ENCODE measurements at regions of chr11 and their contacts with region 1.

Region 1: GRCh38 chr11:111378861-111379601 is at the start of gene POU2AF1:
- DNase-seq: peak; percentile 36 to 87 (median 83)
- ATAC-seq: peak; percentile 91
- H3K4me3 ChIP-seq: peak within 1 kb of the TSS; percentile 39
- H3K4me3 Mint-ChIP-seq: peak within 1 kb of the TSS; percentile 73 to 89 (median 84)
- H3K27ac ChIP-seq: peak within 1 kb of the TSS; percentile 58
- H3K27ac Mint-ChIP-seq: peak within 1 kb of the TSS; percentile 85 to 99 (median 95)
- H3K4me1 ChIP-seq: peaks cover 0 to 19% of the 10 kb centered on the region in 2 donors
- H3K4me1 Mint-ChIP-seq: peaks cover 7 to 50% (median 42%) of the 10 kb centered on the region in 7 donors
- H3K27me3 ChIP-seq: no peaks in the 10 kb centered on the region
- H3K27me3 Mint-ChIP-seq: peaks cover 0 to 3% (median 0%) of the 10 kb centered on the region in 5 donors
- total RNA-seq, gene POU2AF1: 0.57 to 11.3 (median 4.9) TPM

Region 2: DNA sequence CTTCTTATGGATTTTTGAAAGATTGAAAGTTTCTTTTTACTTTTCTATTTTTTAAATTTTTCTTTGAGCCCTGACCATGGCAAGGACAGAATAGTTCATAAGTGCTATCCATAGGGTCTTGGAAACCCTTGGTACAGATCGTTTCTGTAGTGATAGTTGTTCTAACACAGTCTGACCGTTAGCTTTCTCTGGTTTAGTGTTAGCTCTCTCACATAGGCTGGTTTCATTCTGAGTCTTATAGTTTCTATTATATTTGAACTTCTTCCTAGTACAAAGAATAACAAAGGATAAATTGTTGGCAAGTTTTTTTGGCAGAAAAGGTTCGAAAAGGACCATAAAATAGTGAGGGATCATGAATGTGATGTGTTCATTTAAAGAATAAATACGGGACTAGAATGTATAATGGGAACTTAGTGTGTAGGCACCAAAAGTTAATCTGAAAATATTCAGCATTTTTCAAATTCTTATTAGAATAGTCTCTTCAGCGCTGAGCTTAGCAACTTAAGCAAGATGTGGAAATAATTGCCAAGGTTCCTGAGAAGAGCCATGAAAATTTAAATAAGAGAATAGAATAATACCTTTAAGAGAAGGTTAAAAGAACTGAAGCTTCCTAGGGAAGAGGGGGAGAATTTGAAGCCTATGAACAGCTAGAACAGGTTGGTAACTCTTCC is 925.2 kb before region 1 on chr11:
- CTCF ChIA-PET with region 1: no interaction called
- POLR2A ChIA-PET with region 1: no interaction called
- intact Hi-C with region 1: loop called in 1 of 2 experiments (anchors 10 kb)
- DNase-seq: no peak
- ATAC-seq: no peak
- H3K4me3 ChIP-seq: no peak overlapping the region
- H3K4me3 Mint-ChIP-seq: peak overlapping the region in 1 of 10 donors; percentile 71
- H3K27ac ChIP-seq: no peak overlapping the region
- H3K27ac Mint-ChIP-seq: peak overlapping the region in 1 of 9 donors; percentile 73
- H3K4me1 ChIP-seq: no peaks in the 10 kb centered on the region
- H3K4me1 Mint-ChIP-seq: peaks cover 19 to 54% (median 41%) of the 10 kb centered on the region in 7 donors
- H3K27me3 ChIP-seq: no peaks in the 10 kb centered on the region
- H3K27me3 Mint-ChIP-seq: no peaks in the 10 kb centered on the region

Region 3: DNA sequence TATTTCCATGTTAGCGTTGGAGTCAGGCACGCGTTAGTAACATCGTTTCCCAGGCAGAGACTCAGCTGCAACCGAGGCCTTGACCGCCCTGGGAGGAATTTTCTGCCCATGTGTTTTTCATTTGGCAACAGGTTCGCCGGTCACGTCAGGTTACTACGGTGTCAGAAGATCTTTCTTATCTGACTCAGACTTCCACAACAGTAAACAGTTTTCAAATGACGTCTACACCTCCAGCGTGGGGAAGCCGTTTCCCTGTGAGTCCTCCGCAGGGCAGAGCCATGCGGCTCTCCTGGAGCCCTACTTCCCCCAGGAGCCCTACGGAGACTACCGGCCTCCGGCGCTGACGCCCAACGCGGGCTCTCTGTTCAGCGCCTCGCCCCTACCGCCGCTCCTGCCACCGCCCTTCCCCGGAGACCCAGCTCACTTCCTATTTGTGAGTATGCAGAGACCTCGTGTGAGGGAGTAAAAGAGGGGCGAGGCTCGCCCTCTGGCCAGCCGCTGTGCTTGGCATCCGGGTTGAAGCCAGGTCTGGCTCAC is 95.0 kb before region 1 on chr11:
- CTCF ChIA-PET with region 1: interaction called, 4 read pairs
- POLR2A ChIA-PET with region 1: no interaction called
- intact Hi-C with region 1: loop called in 1 of 2 experiments (anchors 2 kb)
- DNase-seq: no peak
- ATAC-seq: peak; percentile 6
- H3K4me3 ChIP-seq: no peak overlapping the region
- H3K4me3 Mint-ChIP-seq: no peak overlapping the region
- H3K27ac ChIP-seq: no peak overlapping the region
- H3K27ac Mint-ChIP-seq: no peak overlapping the region
- H3K4me1 ChIP-seq: no peaks in the 10 kb centered on the region
- H3K4me1 Mint-ChIP-seq: peaks cover 0 to 3% (median 0%) of the 10 kb centered on the region in 7 donors
- H3K27me3 ChIP-seq: no peaks in the 10 kb centered on the region
- H3K27me3 Mint-ChIP-seq: peaks cover 0 to 14% (median 0%) of the 10 kb centered on the region in 5 donors

Region 4: GRCh38 chr11:111336582-111337256 is 42.3 kb before region 1 on chr11:
- CTCF ChIA-PET with region 1: no interaction called
- POLR2A ChIA-PET with region 1: no interaction called
- intact Hi-C with region 1: no loop called
- DNase-seq: no peak
- ATAC-seq: no peak
- H3K4me3 ChIP-seq: no peak overlapping the region
- H3K4me3 Mint-ChIP-seq: no peak overlapping the region
- H3K27ac ChIP-seq: no peak overlapping the region
- H3K27ac Mint-ChIP-seq: no peak overlapping the region
- H3K4me1 ChIP-seq: no peaks in the 10 kb centered on the region
- H3K4me1 Mint-ChIP-seq: no peaks in the 10 kb centered on the region
- H3K27me3 ChIP-seq: no peaks in the 10 kb centered on the region
- H3K27me3 Mint-ChIP-seq: peaks cover 0 to 12% (median 0%) of the 10 kb centered on the region in 5 donors

Region 5: DNA sequence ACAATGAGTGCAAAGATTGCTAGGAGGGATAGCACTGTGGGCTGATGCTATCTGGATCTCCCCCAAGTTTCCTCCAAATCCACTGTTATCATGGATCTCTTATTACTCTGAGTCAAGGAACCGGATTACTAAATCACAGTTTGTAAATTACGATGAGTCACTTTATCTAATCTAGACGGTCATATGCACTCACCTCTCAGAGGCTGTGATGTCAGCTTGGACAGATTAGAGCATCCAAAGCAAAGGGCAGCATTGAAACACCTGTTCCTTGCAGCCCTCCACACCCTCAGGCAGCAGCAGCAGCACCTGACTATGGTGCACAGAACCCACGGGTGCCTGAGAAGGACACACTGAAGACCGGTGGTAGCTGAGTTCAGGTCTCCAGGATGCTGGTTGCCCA is 14.1 kb after region 1 on chr11:
- CTCF ChIA-PET with region 1: no interaction called
- POLR2A ChIA-PET with region 1: no interaction called
- intact Hi-C with region 1: no loop called
- DNase-seq: no peak
- ATAC-seq: no peak
- H3K4me3 ChIP-seq: no peak overlapping the region
- H3K4me3 Mint-ChIP-seq: no peak overlapping the region
- H3K27ac ChIP-seq: no peak overlapping the region
- H3K27ac Mint-ChIP-seq: no peak overlapping the region
- H3K4me1 ChIP-seq: no peaks in the 10 kb centered on the region
- H3K4me1 Mint-ChIP-seq: peaks cover 0 to 9% (median 0%) of the 10 kb centered on the region in 7 donors
- H3K27me3 ChIP-seq: no peaks in the 10 kb centered on the region
- H3K27me3 Mint-ChIP-seq: no peaks in the 10 kb centered on the region

Region 6: GRCh38 chr11:111409915-111410314 is 30.9 kb after region 1 on chr11:
- CTCF ChIA-PET with region 1: no interaction called
- POLR2A ChIA-PET with region 1: no interaction called
- intact Hi-C with region 1: loop called (anchors 5 kb)
- DNase-seq: no peak
- ATAC-seq: peak; percentile 46
- H3K4me3 ChIP-seq: no peak overlapping the region
- H3K4me3 Mint-ChIP-seq: no peak overlapping the region
- H3K27ac ChIP-seq: no peak overlapping the region
- H3K27ac Mint-ChIP-seq: no peak overlapping the region
- H3K4me1 ChIP-seq: peaks cover 0 to 8% of the 10 kb centered on the region in 2 donors
- H3K4me1 Mint-ChIP-seq: peaks cover 6 to 32% (median 14%) of the 10 kb centered on the region in 7 donors
- H3K27me3 ChIP-seq: no peaks in the 10 kb centered on the region
- H3K27me3 Mint-ChIP-seq: no peaks in the 10 kb centered on the region

Region 7: DNA sequence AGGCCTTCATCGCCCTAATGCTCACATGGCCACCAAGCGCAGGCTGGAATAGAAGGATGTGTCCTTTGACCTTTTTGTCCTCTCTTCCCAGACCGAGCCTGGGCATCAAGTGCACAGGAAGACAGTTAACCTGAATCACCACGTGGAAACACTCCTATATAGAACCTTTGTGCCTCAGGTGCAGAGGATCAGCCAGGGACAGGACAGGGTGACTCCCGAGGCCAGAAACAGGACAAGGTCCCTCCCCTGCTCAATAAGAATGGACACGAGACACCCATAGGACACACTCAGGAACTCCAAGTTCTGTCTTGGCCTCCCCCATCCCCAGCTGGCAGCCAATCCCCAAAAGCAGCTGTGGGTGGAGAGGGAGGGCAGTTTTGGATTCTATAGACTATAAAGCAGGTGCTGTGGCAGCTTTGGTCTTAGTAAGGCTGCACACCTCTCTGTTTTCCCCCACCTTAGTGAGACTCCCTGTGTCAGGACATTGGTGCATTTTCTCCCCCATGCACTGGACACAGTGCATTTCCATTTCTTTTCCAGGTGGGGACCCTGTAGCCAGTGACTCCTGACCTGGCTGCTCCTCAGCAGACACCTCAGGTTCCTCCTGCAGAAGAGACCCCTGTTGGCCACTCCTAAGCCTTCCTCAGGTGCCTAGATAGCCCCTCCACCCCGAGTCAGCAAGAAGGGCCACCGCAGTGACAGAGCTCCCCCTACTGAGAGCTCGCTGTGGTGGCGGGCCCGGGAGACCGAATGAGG is 43.6 kb after region 1 on chr11:
- CTCF ChIA-PET with region 1: no interaction called
- POLR2A ChIA-PET with region 1: no interaction called
- intact Hi-C with region 1: loop called (anchors 2 to 5 kb)
- DNase-seq: peak in 7 of 9 donors; percentile 13 to 63 (median 47)
- ATAC-seq: peak; percentile 73
- H3K4me3 ChIP-seq: no peak overlapping the region
- H3K4me3 Mint-ChIP-seq: no peak overlapping the region
- H3K27ac ChIP-seq: no peak overlapping the region
- H3K27ac Mint-ChIP-seq: no peak overlapping the region
- H3K4me1 ChIP-seq: no peaks in the 10 kb centered on the region
- H3K4me1 Mint-ChIP-seq: peaks cover 3 to 18% (median 8%) of the 10 kb centered on the region in 7 donors
- H3K27me3 ChIP-seq: no peaks in the 10 kb centered on the region
- H3K27me3 Mint-ChIP-seq: no peaks in the 10 kb centered on the region

Region 8: DNA sequence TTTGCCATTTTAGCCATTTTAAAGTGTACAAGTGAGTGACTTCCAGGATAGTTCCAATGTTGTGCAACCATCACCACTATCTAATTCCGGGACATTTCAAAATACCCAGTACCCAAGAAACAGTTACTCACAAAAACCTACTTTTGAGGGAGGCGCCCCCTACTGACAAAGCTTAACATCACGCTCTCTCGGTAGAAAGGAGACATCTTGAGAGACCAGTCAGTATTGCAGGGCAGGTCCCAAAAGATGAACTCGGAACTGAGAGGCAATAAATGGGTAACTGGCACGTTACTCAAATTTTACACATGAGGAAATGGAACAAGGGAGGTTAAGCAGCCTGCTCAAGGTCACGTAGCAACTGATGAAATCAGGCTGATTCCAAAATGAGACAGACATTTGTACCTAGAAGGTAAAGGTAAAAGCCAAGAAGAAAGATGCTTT is 50.1 kb after region 1 on chr11:
- CTCF ChIA-PET with region 1: no interaction called
- POLR2A ChIA-PET with region 1: no interaction called
- intact Hi-C with region 1: loop called in 1 of 2 experiments (anchors 2 kb)
- DNase-seq: peak in 7 of 9 donors; percentile 17 to 66 (median 40)
- ATAC-seq: peak; percentile 53
- H3K4me3 ChIP-seq: no peak overlapping the region
- H3K4me3 Mint-ChIP-seq: no peak overlapping the region
- H3K27ac ChIP-seq: no peak overlapping the region
- H3K27ac Mint-ChIP-seq: no peak overlapping the region
- H3K4me1 ChIP-seq: no peaks in the 10 kb centered on the region
- H3K4me1 Mint-ChIP-seq: peaks cover 0 to 2% (median 0%) of the 10 kb centered on the region in 7 donors
- H3K27me3 ChIP-seq: no peaks in the 10 kb centered on the region
- H3K27me3 Mint-ChIP-seq: peaks cover 0 to 9% (median 0%) of the 10 kb centered on the region in 5 donors